ENCODE measurements at regions of chr6 and their contacts with region 1.

Region 1: GRCh38 chr6:27138837-27139755 is 108.4 kb upstream of the PRSS16 start:
- DNase-seq: peak; percentile 91 to 92
- H3K4me3 ChIP-seq: peak overlapping the region; percentile 50 to 95 (median 70)
- H3K27ac ChIP-seq: peak overlapping the region; percentile 95
- H3K4me1 ChIP-seq: peaks cover 0 to 10% (median 4%) of the 10 kb centered on the region in 4 experiments; a peak in 5 of 7 replicates
- H3K27me3 ChIP-seq: no peaks in the 10 kb centered on the region
- CTCF ChIP-seq: no peak
- EP300 ChIP-seq: peak; percentile 40 to 99
- POLR2A ChIP-seq: peak; percentile 91 to 99
- RAD21 ChIP-seq: no peak

Region 2: DNA sequence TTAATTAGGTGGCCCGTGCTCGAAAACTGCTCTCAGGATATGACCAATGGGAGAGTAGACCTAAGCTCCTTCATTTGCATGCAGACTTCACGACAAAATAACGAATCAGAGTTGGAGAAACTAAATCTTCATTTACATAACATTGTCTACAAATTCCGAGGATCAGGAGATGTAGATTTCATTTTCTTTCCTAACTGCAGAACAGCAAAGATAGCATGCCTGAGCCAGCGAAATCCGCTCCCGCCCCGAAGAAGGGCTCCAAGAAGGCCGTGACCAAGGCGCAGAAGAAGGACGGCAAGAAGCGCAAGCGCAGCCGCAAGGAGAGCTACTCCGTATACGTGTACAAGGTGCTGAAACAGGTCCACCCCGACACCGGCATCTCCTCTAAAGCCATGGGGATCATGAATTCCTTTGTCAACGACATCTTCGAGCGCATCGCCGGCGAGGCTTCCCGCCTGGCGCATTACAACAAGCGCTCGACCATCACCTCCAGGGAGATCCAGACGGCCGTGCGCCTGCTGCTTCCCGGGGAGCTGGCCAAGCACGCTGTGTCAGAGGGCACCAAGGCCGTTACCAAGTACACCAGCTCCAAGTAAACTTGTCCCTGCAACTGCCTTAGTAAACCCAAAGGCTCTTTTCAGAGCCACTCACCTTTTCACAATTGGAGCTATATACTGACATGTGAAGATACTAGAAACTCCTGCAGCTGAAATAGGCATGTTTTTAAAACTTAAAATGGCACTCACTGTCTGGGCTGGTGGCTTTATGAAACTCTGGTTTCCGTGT is 955.3 kb before region 1 on chr6:
- CTCF ChIA-PET with region 1: no interaction called
- POLR2A ChIA-PET with region 1: interaction called, 27 read pairs
- DNase-seq: peak in 1 of 2 experiments; percentile 82
- H3K4me3 ChIP-seq: peak overlapping the region; percentile 45 to 73 (median 70)
- H3K27ac ChIP-seq: peak overlapping the region; percentile 97
- H3K4me1 ChIP-seq: peaks cover 0 to 17% (median 8%) of the 10 kb centered on the region in 4 experiments; a peak in 5 of 7 replicates
- H3K27me3 ChIP-seq: no peaks in the 10 kb centered on the region
- CTCF ChIP-seq: no peak
- EP300 ChIP-seq: no peak
- POLR2A ChIP-seq: peak; percentile 94 to 99
- RAD21 ChIP-seq: no peak

Region 3: GRCh38 chr6:26249957-26250697 is 889.0 kb before region 1 on chr6:
- CTCF ChIA-PET with region 1: no interaction called
- POLR2A ChIA-PET with region 1: interaction called, 16 read pairs
- DNase-seq: peak in 1 of 2 experiments; percentile 73
- H3K4me3 ChIP-seq: peak overlapping the region; percentile 75 to 98 (median 90)
- H3K27ac ChIP-seq: peak overlapping the region; percentile 97
- H3K4me1 ChIP-seq: peaks cover 0 to 5% (median 4%) of the 10 kb centered on the region in 4 experiments; a peak in 5 of 7 replicates
- H3K27me3 ChIP-seq: no peaks in the 10 kb centered on the region
- CTCF ChIP-seq: peak in 2 of 3 experiments; percentile 23 to 34; a peak in 2 of 4 replicates
- EP300 ChIP-seq: 0 out of 3 replicates have a peak, but pooled peaks of 1 of the 2 experiments have one; percentile 34
- POLR2A ChIP-seq: peak; percentile 98
- RAD21 ChIP-seq: no peak

Region 4: DNA sequence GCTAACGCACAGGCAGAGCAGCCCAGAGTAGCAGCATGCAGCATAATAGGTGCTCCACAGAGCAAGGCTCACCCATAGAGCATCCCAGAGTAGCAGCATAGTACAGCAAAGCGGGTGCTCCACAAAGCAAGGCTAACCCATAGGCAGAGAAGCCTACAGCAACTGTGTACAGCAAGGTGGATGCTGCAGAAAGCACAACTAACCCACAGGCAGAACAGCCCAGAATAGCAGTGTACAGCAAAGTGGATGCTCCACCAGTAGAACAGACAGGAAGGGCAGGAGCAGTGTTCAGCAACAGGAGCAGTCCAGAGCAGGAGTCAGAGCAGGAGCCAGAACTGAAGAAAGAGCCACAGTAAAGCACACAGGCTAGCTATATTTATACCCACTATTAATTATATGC is 24.3 kb before region 1 on chr6:
- CTCF ChIA-PET with region 1: no interaction called
- POLR2A ChIA-PET with region 1: no interaction called
- DNase-seq: no peak
- H3K4me3 ChIP-seq: no peak overlapping the region
- H3K27ac ChIP-seq: no peak overlapping the region
- H3K4me1 ChIP-seq: no peaks in the 10 kb centered on the region
- H3K27me3 ChIP-seq: no peaks in the 10 kb centered on the region
- CTCF ChIP-seq: no peak
- EP300 ChIP-seq: no peak
- POLR2A ChIP-seq: no peak
- RAD21 ChIP-seq: no peak

Region 5: GRCh38 chr6:27157459-27158315 is 18.6 kb after region 1 on chr6:
- CTCF ChIA-PET with region 1: interaction called, 3 read pairs
- POLR2A ChIA-PET with region 1: interaction called, 824 read pairs
- DNase-seq: peak in 1 of 2 experiments; percentile 77
- H3K4me3 ChIP-seq: peak overlapping the region; percentile 74 to 85 (median 84)
- H3K27ac ChIP-seq: no peak overlapping the region
- H3K4me1 ChIP-seq: peaks cover 2 to 11% (median 7%) of the 10 kb centered on the region in 4 experiments; a peak in 5 of 7 replicates
- H3K27me3 ChIP-seq: no peaks in the 10 kb centered on the region
- CTCF ChIP-seq: peak; percentile 33 to 65 (median 52)
- EP300 ChIP-seq: no peak
- POLR2A ChIP-seq: no peak
- RAD21 ChIP-seq: peak in 1 of 2 experiments; percentile 25; a peak in 2 of 4 replicates

Region 6: DNA sequence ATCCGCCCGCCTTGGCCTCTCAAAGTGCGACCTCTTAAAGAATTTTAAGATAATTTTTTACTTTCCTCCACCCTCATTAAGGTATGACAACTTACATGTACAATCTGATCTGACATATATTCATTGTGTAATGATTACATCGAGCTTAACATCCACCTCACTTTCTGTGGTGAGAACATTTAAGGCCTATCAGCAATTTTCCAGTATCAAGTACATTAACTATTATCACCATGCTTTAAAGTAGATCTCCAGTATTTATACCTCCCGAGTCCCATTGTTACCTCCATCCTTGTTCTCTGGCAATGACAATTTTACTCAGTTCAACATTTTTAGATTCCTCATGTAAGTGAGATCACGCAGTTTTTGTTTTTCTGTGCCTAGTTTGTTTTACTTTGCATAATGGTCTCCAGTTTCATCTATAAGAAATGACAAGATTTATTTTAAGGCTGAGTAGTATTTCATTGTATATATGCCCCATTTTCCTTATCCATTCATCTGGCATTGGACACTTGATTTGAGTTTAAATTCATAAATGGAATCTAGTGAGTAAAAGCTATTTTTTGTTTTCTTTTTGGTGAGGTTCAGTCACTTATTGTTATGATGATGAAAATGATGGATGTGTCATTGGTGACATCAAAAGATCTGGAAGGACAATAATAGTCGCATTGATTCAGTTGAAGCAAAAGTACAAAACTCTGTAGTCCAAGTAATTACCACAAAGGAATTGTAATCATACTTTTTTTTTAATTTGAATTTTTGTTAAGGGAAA is 686.1 kb after region 1 on chr6:
- CTCF ChIA-PET with region 1: no interaction called
- POLR2A ChIA-PET with region 1: interaction called, 92 read pairs
- DNase-seq: no peak
- H3K4me3 ChIP-seq: peak overlapping the region; percentile 59 to 90 (median 81)
- H3K27ac ChIP-seq: peak overlapping the region; percentile 95; the same call in 1 of the 2 replicates
- H3K4me1 ChIP-seq: peaks cover 0 to 3% (median 0%) of the 10 kb centered on the region in 4 experiments; a peak in 1 of 7 replicates
- H3K27me3 ChIP-seq: no peaks in the 10 kb centered on the region
- CTCF ChIP-seq: no peak
- EP300 ChIP-seq: no peak
- POLR2A ChIP-seq: peak in 1 of 2 experiments; percentile 32; a peak in 2 of 3 replicates
- RAD21 ChIP-seq: no peak

Region 7: GRCh38 chr6:27871924-27872638 is 733.0 kb after region 1 on chr6:
- CTCF ChIA-PET with region 1: no interaction called
- POLR2A ChIA-PET with region 1: interaction called, 211 read pairs
- DNase-seq: peak in 1 of 2 experiments; percentile 89
- H3K4me3 ChIP-seq: peak overlapping the region; percentile 61 to 73 (median 67)
- H3K27ac ChIP-seq: peak overlapping the region; percentile 96
- H3K4me1 ChIP-seq: peaks cover 0 to 16% (median 9%) of the 10 kb centered on the region in 4 experiments; a peak in 5 of 7 replicates
- H3K27me3 ChIP-seq: no peaks in the 10 kb centered on the region
- CTCF ChIP-seq: peak in 2 of 3 experiments; percentile 22 to 26; a peak in 3 of 4 replicates
- EP300 ChIP-seq: no peak; a peak in 1 of 3 replicates
- POLR2A ChIP-seq: peak; percentile 97 to 98
- RAD21 ChIP-seq: no peak